Ascending aorta (tissue), 2 donors: ENCODE measurements at regions of chr11 and their contacts with region 1.

Region 1: GRCh38 chr11:122309262-122309925 is 193.4 kb upstream of the BLID start:
- DNase-seq: peak in 1 of 2 donors; percentile 67
- H3K4me3 ChIP-seq: peak overlapping the region; percentile 47 to 62
- H3K27ac ChIP-seq: peak overlapping the region; percentile 88 to 89
- H3K4me1 ChIP-seq: peaks cover 0 to 14% of the 10 kb centered on the region in 2 donors
- H3K27me3 ChIP-seq: no peaks in the 10 kb centered on the region
- CTCF ChIP-seq: no peak

Region 2: GRCh38 chr11:122108192-122108799 is 201.1 kb before region 1 on chr11:
- intact Hi-C with region 1: loop called (anchors 10 kb)
- DNase-seq: no peak
- H3K4me3 ChIP-seq: no peak overlapping the region
- H3K27ac ChIP-seq: peak overlapping the region; percentile 56 to 69
- H3K4me1 ChIP-seq: peaks cover 3 to 32% of the 10 kb centered on the region in 2 donors
- H3K27me3 ChIP-seq: no peaks in the 10 kb centered on the region
- CTCF ChIP-seq: peak in 1 of 3 experiments; percentile 25

Region 3: GRCh38 chr11:122209619-122210366 is 99.6 kb before region 1 on chr11:
- intact Hi-C with region 1: loop called (anchors 5 kb)
- DNase-seq: peak in 1 of 2 donors; percentile 92
- H3K4me3 ChIP-seq: peak overlapping the region in 1 of 2 donors; percentile 6
- H3K27ac ChIP-seq: peak overlapping the region; percentile 86 to 90
- H3K4me1 ChIP-seq: peaks cover 5 to 62% of the 10 kb centered on the region in 2 donors
- H3K27me3 ChIP-seq: no peaks in the 10 kb centered on the region
- CTCF ChIP-seq: no peak

Region 4: DNA sequence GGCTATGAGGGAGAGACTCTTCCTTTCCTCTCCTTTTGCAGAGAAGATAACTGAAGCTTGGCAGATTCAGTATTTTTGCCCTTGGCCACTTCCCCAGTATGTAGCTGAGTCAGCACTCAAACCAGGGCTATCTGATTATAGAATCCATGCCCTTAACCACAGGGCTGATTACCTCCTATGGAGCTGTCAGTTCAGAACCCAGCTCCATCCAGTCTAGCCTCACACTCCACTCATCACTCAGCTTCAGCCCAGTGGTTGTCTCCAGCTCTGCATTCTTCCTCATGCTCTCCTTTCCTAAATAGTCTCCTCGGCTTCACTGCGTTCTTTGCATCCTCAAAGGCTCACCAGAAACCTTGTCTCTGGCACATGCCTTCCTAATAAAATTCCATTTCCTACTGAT is 41.8 kb before region 1 on chr11:
- intact Hi-C with region 1: no loop called
- DNase-seq: no peak
- H3K4me3 ChIP-seq: no peak overlapping the region
- H3K27ac ChIP-seq: no peak overlapping the region
- H3K4me1 ChIP-seq: peaks cover 0 to 3% of the 10 kb centered on the region in 2 donors
- H3K27me3 ChIP-seq: no peaks in the 10 kb centered on the region
- CTCF ChIP-seq: no peak

Region 5: DNA sequence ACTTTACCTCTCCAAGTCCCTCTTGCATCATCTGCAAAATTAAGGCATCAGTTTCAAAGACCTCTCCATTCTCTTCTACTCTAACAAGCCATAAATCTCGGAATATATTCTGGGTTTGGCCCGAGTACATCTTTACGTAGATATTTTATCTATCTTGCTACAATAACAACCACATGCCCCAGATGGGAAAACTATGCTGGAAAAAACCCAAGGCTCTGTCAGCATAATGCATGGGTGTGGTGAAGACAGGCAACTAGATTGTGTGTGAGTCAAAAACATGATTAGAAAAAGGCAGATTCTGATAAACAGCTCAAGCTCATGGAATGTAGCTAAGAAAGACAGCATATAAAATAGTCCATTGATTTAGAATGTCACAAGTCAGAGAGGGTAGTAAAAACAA is 34.9 kb after region 1 on chr11:
- intact Hi-C with region 1: loop called (anchors 5 kb)
- DNase-seq: no peak
- H3K4me3 ChIP-seq: no peak overlapping the region
- H3K27ac ChIP-seq: peak overlapping the region; percentile 37 to 68
- H3K4me1 ChIP-seq: peaks cover 3 to 31% of the 10 kb centered on the region in 2 donors
- H3K27me3 ChIP-seq: no peaks in the 10 kb centered on the region
- CTCF ChIP-seq: no peak

Region 6: DNA sequence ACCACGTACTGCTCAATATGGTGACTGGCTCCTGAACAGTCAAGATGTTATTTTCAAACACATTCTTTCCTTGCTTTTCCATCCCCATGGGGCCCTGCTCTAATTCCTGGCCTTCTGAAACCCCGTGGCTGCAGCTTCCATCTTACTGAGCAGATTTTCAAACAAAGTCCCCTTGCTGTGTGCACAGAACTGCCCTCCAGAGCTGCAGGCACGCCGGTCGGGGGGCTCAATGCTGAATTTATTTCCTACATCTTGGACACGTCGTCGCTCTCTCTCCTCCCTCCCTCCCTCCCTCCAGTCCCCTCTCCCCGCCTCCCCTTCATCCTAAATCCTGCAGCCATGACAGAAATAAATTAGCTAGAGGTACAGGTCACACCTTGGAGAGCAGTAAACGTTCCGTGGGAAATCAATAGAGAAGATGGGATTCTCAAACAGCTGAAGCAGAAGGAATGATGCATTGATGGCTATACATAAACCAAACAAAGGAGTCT is 49.7 kb after region 1 on chr11:
- intact Hi-C with region 1: loop called (anchors 5 kb)
- DNase-seq: no peak
- H3K4me3 ChIP-seq: no peak overlapping the region
- H3K27ac ChIP-seq: peak overlapping the region; percentile 1 to 29
- H3K4me1 ChIP-seq: peaks cover 0 to 17% of the 10 kb centered on the region in 2 donors
- H3K27me3 ChIP-seq: no peaks in the 10 kb centered on the region
- CTCF ChIP-seq: no peak

Region 7: GRCh38 chr11:122439911-122440810 is 130.8 kb after region 1 on chr11:
- intact Hi-C with region 1: loop called (anchors 5 kb)
- DNase-seq: no peak
- H3K4me3 ChIP-seq: peak overlapping the region; percentile 56 to 83
- H3K27ac ChIP-seq: peak overlapping the region; percentile 43 to 46
- H3K4me1 ChIP-seq: peaks cover 4 to 6% of the 10 kb centered on the region in 2 donors
- H3K27me3 ChIP-seq: no peaks in the 10 kb centered on the region
- CTCF ChIP-seq: no peak

Region 8: DNA sequence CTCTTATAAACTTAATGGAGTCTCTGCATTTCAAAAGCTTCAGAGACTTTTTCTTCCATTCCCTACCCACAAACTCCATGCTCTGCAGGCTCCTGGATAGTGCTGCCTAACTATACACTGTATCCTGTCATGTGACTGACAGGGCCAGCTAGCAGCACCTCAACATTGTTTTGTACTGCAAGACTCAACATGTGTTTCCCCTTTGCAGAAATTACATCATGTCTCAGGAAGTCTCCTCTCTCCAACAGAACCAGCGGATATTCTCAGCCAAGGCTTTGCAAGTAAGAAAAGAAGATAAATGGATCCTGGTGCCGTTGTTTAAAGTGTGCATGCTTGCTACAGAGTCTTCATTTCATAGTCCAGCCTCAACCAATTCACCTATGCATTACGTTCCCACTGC is 182.1 kb after region 1 on chr11:
- intact Hi-C with region 1: loop called (anchors 5 kb)
- DNase-seq: no peak
- H3K4me3 ChIP-seq: no peak overlapping the region
- H3K27ac ChIP-seq: peak overlapping the region; percentile 52 to 57
- H3K4me1 ChIP-seq: peaks cover 0 to 21% of the 10 kb centered on the region in 2 donors
- H3K27me3 ChIP-seq: no peaks in the 10 kb centered on the region
- CTCF ChIP-seq: no peak